Calu3 (cell line): ENCODE measurements at regions of chr17 and their contacts with region 1.

Region 1: DNA sequence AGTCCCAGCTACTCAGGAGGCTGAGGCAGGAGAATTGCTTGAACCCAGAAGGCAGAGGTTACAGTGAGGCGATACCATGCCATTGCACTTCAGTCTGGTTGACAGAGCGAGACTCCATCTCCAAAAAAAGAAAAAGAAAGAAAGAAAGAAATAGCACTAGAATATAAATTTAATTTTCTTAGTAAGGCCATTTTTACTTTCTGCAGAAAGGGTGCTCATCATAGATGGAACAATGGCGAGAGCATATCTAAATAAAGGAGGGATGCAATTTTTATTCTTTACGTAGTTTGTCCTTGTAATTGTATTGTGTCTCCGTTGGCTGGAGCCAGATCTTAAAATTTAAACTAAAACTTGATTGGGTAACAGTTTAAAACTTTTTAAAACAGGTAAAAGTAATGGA is 85.6 kb upstream of the RPRML start:
- DNase-seq: no peak
- H3K4me3 Mint-ChIP-seq: no peak overlapping the region
- H3K27ac Mint-ChIP-seq: no peak overlapping the region
- H3K4me1 Mint-ChIP-seq: peaks cover 32% of the 10 kb centered on the region
- H3K27me3 Mint-ChIP-seq: no peaks in the 10 kb centered on the region
- CTCF ChIP-seq: no peak

Region 2: DNA sequence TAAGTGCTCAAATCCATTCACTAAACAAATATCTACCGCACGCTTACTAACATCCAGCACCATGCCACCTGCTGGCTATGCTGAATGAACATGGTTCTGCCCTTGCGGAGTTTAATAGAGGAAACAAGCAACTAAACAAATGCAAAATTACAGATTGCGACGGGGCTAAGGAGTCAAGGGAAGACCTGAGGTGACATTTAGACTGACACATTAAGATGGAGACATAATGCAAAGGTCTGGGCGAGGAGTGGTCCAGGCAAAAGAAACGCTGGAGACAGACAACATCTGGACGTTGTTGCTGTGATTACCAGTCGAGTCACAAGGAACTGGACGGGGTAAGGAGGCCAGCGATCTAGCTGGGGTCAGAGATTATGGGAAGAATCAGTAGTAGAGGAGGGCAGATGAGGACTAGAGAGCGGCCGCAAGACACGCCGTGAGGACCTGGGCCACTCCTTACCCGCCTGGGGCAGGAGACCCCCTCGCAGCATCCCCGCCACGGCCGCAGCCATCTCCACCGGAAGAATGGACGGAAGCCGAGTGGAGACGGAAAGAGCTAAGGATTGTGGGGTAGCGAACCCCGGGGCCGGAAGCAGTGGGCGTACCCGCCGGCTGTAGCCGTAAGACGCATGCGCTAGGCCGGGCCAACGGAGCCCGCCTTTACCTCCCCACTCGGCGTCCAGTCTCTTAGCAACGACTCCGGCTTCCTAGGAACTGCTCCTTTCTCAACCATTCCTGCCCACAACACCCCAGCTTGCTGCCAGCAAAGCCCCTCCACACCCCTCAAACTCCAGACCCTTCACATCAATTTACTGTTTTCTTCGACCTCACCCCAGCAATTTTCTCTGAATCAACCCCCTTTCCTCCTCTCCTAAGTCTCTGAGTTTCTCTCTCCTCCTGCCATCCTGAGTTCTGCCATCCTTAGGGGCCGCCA is 766.6 kb after region 1 on chr17 and contains the starts of genes LRRC46 and MRPL10:
- CTCF ChIA-PET with region 1: interaction called, 20 read pairs
- intact Hi-C with region 1: no loop called
- DNase-seq: peak; percentile 98
- H3K4me3 Mint-ChIP-seq: peak within 1 kb of the TSS; percentile 95
- H3K27ac Mint-ChIP-seq: peak within 1 kb of the TSS; percentile 89
- H3K4me1 Mint-ChIP-seq: peaks cover 9% of the 10 kb centered on the region
- H3K27me3 Mint-ChIP-seq: no peaks in the 10 kb centered on the region
- CTCF ChIP-seq: peak; percentile 43
- total RNA-seq, gene LRRC46: 2.9 and 4.0 TPM in 2 replicates
- total RNA-seq, gene MRPL10: 70.2 and 84.1 TPM in 2 replicates